B cell (primary cell): ENCODE measurements at regions of chr11 and their contacts with region 1.

Region 1: GRCh38 chr11:126194121-126194543 is 17.3 kb downstream of the RPUSD4 start:
- DNase-seq: peak; percentile 28
- ATAC-seq: no peak
- H3K4me3 ChIP-seq: no peak overlapping the region
- H3K4me3 Mint-ChIP-seq: no peak overlapping the region
- H3K27ac ChIP-seq: no peak overlapping the region
- H3K27ac Mint-ChIP-seq: no peak overlapping the region
- H3K4me1 ChIP-seq: no peaks in the 10 kb centered on the region
- H3K4me1 Mint-ChIP-seq: peaks cover 7% of the 10 kb centered on the region
- H3K27me3 ChIP-seq: no peaks in the 10 kb centered on the region
- H3K27me3 Mint-ChIP-seq: no peaks in the 10 kb centered on the region
- CTCF ChIP-seq: peak; percentile 59

Region 2: DNA sequence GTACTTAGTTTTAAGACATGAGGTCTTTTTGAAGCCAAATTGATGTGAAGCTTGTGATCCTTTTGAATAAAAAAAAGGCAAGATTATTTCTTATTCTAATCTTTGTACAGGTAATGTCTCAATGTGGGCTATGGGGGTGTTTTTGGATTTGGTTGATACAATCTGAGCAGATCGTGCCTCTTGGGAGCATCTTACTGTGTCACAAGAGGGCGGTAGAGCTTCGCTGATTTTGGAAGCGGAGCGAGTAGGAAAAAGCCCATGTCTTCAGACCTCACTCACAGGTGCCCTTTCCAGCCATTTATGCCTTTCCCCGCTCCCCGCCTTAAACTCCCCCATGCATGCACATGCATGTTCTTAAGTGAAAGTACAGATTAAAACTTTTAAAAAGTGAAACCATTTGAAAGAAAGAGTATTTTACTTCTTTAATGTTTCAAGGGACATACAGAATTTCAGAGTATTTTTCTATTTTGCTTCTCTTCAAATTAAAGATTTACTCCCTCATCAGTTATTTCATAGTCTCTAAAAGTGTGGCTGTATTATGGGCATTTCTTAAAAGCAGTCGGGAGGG is 271.0 kb before region 1 on chr11:
- CTCF ChIA-PET with region 1: interaction called, 29 read pairs
- POLR2A ChIA-PET with region 1: no interaction called
- intact Hi-C with region 1: no loop called
- DNase-seq: peak; percentile 61
- ATAC-seq: peak; percentile 43
- H3K4me3 ChIP-seq: no peak overlapping the region
- H3K4me3 Mint-ChIP-seq: no peak overlapping the region
- H3K27ac ChIP-seq: no peak overlapping the region
- H3K27ac Mint-ChIP-seq: no peak overlapping the region
- H3K4me1 ChIP-seq: no peaks in the 10 kb centered on the region
- H3K4me1 Mint-ChIP-seq: peaks cover 2% of the 10 kb centered on the region
- H3K27me3 ChIP-seq: peaks cover 0 to 11% (median 1%) of the 10 kb centered on the region in 4 experiments
- H3K27me3 Mint-ChIP-seq: peaks cover 42% of the 10 kb centered on the region
- CTCF ChIP-seq: peak; percentile 72

Region 3: DNA sequence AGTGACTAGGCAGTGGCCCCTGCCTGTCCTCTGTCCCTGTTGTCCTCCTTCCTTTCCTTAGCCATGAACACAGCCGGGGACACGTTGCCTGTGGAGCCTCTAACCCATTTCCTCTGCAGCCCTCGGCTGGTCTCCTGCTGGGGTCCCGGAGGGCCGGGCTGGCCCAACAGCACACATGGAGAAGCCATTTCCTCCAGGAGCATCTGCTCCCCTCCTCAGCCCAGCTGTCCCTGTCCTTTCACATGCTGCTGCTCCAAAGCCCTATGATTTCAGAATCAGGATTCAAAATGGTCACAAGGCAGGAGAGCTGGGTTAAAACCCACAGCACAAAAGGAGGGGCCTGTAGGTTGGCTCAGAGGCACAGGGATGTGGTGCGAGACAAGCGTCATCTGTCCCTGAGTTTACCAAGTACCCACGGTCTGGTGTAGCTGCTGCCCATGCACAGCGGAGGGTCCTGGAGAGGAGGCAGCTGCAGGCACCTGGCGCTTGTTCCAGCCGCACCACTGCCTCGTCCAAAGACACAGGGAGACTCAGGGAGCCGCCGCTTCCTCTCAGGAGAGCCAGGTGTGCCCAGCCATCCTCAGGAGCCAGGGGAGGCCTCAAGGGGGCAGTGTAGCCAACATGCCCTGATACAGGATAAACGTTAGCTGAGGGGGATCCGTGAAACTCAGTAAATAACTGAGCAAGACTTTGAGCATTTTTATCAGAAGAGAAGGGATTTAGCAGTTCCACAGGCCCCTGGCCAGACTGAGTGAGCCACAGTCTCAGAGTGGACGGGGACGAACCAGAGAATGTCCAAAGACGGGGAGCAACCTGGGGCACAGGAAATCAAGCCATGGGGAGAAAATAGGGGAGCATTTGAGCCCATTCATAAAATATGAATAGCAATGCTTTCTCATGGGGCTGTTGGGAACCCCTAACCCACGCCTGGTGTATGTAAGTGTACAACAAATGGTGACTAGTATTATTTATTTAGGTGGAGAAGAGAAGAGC is 252.2 kb before region 1 on chr11:
- CTCF ChIA-PET with region 1: interaction called, 13 read pairs
- POLR2A ChIA-PET with region 1: no interaction called
- intact Hi-C with region 1: no loop called
- DNase-seq: no peak
- ATAC-seq: no peak
- H3K4me3 ChIP-seq: no peak overlapping the region
- H3K4me3 Mint-ChIP-seq: no peak overlapping the region
- H3K27ac ChIP-seq: no peak overlapping the region
- H3K27ac Mint-ChIP-seq: no peak overlapping the region
- H3K4me1 ChIP-seq: no peaks in the 10 kb centered on the region
- H3K4me1 Mint-ChIP-seq: no peaks in the 10 kb centered on the region
- H3K27me3 ChIP-seq: peaks cover 0 to 4% (median 0%) of the 10 kb centered on the region in 4 experiments
- H3K27me3 Mint-ChIP-seq: peaks cover 4% of the 10 kb centered on the region
- CTCF ChIP-seq: peak; percentile 26

Region 4: DNA sequence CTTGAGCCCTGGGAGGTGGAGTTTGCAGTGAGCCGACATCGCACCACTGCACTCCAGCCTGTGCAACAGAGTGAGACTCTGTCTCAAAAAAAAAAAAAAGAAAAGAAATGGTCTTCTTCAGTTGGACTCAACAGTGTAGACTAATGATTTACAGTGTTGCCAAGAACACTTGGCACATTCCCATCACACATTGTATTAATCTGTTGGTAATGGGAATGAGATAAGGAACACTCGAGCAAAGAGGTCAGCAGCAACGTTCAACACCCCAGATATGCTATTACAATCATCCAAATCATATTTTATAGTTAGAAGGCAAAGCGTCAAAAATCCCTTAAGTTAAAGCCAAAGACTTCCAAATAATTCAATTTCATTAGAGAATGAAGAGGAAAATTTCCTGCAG is 145.9 kb before region 1 on chr11:
- CTCF ChIA-PET with region 1: no interaction called
- POLR2A ChIA-PET with region 1: no interaction called
- intact Hi-C with region 1: no loop called
- DNase-seq: no peak
- ATAC-seq: no peak
- H3K4me3 ChIP-seq: no peak overlapping the region
- H3K4me3 Mint-ChIP-seq: no peak overlapping the region
- H3K27ac ChIP-seq: no peak overlapping the region
- H3K27ac Mint-ChIP-seq: no peak overlapping the region
- H3K4me1 ChIP-seq: no peaks in the 10 kb centered on the region
- H3K4me1 Mint-ChIP-seq: no peaks in the 10 kb centered on the region
- H3K27me3 ChIP-seq: no peaks in the 10 kb centered on the region
- H3K27me3 Mint-ChIP-seq: peaks cover 19% of the 10 kb centered on the region
- CTCF ChIP-seq: no peak